ENCODE measurements at regions of chr17 and their contacts with region 1.

Region 1: DNA sequence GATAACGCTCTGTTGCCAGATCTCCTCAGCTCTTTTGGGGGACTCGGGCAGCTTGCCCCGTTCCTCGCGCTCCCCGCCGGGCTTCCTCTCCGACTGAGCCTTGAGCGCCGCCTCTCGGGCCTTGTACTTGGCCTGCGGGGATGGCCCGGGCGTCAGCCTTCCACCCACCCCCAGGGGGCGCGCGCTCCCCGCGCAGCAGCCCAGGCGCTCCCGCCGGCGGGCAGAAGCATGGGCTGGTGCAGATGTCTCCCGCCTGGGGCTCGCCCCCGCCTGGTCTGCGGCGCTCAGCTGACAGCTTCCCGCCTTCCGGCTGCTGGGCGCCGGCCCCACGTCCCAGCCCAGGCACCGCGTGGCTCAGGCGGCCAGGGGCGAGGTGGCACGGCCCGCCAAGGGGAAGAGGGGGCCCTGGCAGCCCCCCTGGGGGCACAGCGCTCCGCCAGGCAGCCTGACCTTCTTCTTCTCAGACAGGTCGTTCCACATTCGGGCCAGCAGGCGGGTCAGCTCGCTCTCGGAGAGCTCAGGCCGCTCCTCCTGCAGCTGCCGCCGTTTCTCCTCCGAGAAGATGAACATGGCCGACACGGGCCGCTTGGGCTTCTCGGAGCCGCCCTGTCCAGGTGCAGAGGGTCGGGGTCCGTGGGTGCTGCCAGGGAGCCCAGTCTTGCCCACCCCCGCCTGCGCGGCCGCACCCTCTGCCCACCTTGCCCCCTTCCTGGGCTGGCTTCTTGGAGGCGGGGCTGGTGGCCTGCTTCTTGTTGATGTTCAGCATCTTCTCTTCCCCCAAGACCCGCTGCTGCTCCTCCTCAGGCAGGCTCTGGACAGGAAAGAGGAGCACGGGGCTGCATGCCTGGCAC is 8.9 kb downstream of the UBTF start:
- DNase-seq: peak; percentile 95 to 96
- ATAC-seq: peak; percentile 96 to 100 (median 98)
- H3K4me3 ChIP-seq: no peak overlapping the region
- H3K4me3 Mint-ChIP-seq: peak overlapping the region; percentile 40
- H3K27ac ChIP-seq: peak overlapping the region; percentile 13
- H3K27ac Mint-ChIP-seq: peak overlapping the region; percentile 70 to 85
- H3K4me1 ChIP-seq: peaks cover 33% of the 10 kb centered on the region
- H3K4me1 Mint-ChIP-seq: peaks cover 17 to 35% of the 10 kb centered on the region in 2 donors
- H3K27me3 ChIP-seq: no peaks in the 10 kb centered on the region
- H3K27me3 Mint-ChIP-seq: no peaks in the 10 kb centered on the region
- CTCF ChIP-seq: peak; percentile 99

Region 2: DNA sequence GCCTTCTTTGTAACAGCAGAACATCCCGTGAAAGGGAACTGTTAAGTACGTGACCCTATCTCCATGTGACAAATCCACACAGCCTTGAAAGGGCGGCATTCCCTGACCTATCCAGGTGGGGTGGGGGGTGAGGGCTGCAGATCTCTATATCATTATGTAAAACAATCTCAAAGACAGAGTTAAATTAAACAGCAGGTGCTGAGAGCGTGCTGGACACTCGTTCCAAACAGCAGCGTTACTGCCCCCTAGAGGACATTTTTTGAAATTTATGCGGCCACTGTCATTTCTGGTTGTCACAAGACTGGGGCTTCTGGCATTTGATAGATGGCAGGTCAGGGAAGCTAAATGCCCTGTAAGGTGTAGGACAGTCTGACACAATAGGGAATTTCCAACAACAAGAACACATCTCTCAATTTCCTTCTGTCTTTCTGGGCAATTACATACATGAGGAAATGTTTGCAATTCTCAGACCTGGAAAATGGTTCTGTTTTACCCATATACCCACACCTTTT is 120.7 kb after region 1 on chr17:
- intact Hi-C with region 1: loop called (anchors 1 kb)
- DNase-seq: peak; percentile 57 to 88
- ATAC-seq: peak; percentile 39 to 56 (median 47)
- H3K4me3 ChIP-seq: no peak overlapping the region
- H3K4me3 Mint-ChIP-seq: no peak overlapping the region
- H3K27ac ChIP-seq: no peak overlapping the region
- H3K27ac Mint-ChIP-seq: no peak overlapping the region
- H3K4me1 ChIP-seq: peaks cover 20% of the 10 kb centered on the region
- H3K4me1 Mint-ChIP-seq: peaks cover 6 to 10% of the 10 kb centered on the region in 2 donors
- H3K27me3 ChIP-seq: no peaks in the 10 kb centered on the region
- H3K27me3 Mint-ChIP-seq: no peaks in the 10 kb centered on the region
- CTCF ChIP-seq: peak; percentile 81

Region 3: GRCh38 chr17:44344939-44345453 is 134.4 kb after region 1 on chr17 and contains the start of gene GRN:
- intact Hi-C with region 1: loop called (anchors 5 kb)
- DNase-seq: peak; percentile 81 to 91
- ATAC-seq: peak; percentile 98
- H3K4me3 ChIP-seq: peak within 1 kb of the TSS; percentile 64
- H3K4me3 Mint-ChIP-seq: peak within 1 kb of the TSS; percentile 97
- H3K27ac ChIP-seq: peak within 1 kb of the TSS; percentile 35
- H3K27ac Mint-ChIP-seq: peak within 1 kb of the TSS; percentile 76 to 85
- H3K4me1 ChIP-seq: peaks cover 56% of the 10 kb centered on the region
- H3K4me1 Mint-ChIP-seq: peaks cover 16 to 29% of the 10 kb centered on the region in 2 donors
- H3K27me3 ChIP-seq: no peaks in the 10 kb centered on the region
- H3K27me3 Mint-ChIP-seq: peaks cover 19 to 25% of the 10 kb centered on the region in 2 donors
- CTCF ChIP-seq: no peak
- total RNA-seq, gene GRN: 42.4 to 69.8 (median 55.6) TPM

Measured in natural killer cell (primary cell).